SK-N-SH (cell line): ENCODE measurements at regions of chr4 and their contacts with region 1.

Region 1: GRCh38 chr4:176340871-176341685 is 21.3 kb downstream of the SPCS3 start:
- DNase-seq: peak; percentile 46
- H3K4me3 ChIP-seq: no peak overlapping the region
- H3K27ac ChIP-seq: no peak overlapping the region
- H3K4me1 ChIP-seq: peaks cover 0 to 10% of the 10 kb centered on the region in 2 experiments; a peak in 3 of 4 replicates
- H3K27me3 ChIP-seq: no peaks in the 10 kb centered on the region
- CTCF ChIP-seq: peak; percentile 80
- EP300 ChIP-seq: no peak
- RAD21 ChIP-seq: peak; percentile 89

Region 2: GRCh38 chr4:175947117-175947722 is 393.9 kb before region 1 on chr4:
- CTCF ChIA-PET with region 1: interaction called, 17 read pairs
- POLR2A ChIA-PET with region 1: no interaction called
- DNase-seq: no peak
- H3K4me3 ChIP-seq: peak overlapping the region in 1 of 2 experiments; percentile 17; a peak in 1 of 4 replicates
- H3K27ac ChIP-seq: no peak overlapping the region
- H3K4me1 ChIP-seq: no peaks in the 10 kb centered on the region; a peak in 1 of 4 replicates
- H3K27me3 ChIP-seq: no peaks in the 10 kb centered on the region
- CTCF ChIP-seq: peak; percentile 66
- EP300 ChIP-seq: no peak
- RAD21 ChIP-seq: peak; percentile 59

Region 3: GRCh38 chr4:176013476-176014247 is 327.4 kb before region 1 on chr4:
- CTCF ChIA-PET with region 1: no interaction called
- POLR2A ChIA-PET with region 1: no interaction called
- DNase-seq: no peak
- H3K4me3 ChIP-seq: no peak overlapping the region
- H3K27ac ChIP-seq: no peak overlapping the region
- H3K4me1 ChIP-seq: no peaks in the 10 kb centered on the region
- H3K27me3 ChIP-seq: no peaks in the 10 kb centered on the region; the same call in 1 of the 2 replicates
- CTCF ChIP-seq: no peak
- EP300 ChIP-seq: no peak
- RAD21 ChIP-seq: no peak

Region 4: DNA sequence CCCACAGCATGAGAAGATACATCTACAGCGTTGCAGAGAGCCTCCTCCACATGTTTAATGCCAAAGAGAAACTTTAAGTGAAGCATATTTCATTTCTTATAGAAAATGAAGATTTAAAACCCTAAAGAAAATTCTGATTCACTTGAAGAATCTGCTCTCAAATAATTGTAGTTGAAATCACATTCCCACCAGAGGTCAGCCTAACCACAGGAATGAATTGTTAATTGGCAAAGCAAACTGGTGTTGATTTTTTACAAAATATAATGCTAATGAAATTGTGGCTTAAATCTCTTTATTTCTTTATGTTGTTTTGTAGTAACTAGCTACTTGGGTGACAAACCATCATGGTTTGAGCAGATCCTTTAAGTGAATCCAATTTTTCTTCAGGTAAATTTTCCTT is 306.6 kb before region 1 on chr4:
- CTCF ChIA-PET with region 1: interaction called, 48 read pairs
- POLR2A ChIA-PET with region 1: no interaction called
- DNase-seq: peak; percentile 24
- H3K4me3 ChIP-seq: no peak overlapping the region
- H3K27ac ChIP-seq: no peak overlapping the region
- H3K4me1 ChIP-seq: no peaks in the 10 kb centered on the region
- H3K27me3 ChIP-seq: peaks cover 4% of the 10 kb centered on the region
- CTCF ChIP-seq: peak; percentile 55
- EP300 ChIP-seq: no peak
- RAD21 ChIP-seq: peak; percentile 84

Region 5: DNA sequence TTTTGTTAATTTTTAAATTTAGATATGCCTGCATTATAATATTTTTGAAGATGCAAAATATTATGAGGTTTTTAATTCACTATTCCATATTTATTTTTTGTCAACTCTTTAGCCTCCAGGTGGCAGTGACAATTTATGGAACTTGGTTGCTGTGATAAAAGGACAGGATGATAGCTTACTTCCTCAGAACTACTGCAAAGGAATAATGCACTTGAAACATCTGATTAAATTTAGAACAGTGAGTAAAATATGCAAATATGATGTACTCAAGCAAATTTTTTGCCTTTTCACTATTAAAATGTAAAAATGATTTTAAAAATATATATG is 190.8 kb before region 1 on chr4:
- CTCF ChIA-PET with region 1: interaction called, 30 read pairs
- POLR2A ChIA-PET with region 1: no interaction called
- DNase-seq: peak; percentile 17
- H3K4me3 ChIP-seq: no peak overlapping the region
- H3K27ac ChIP-seq: no peak overlapping the region; a peak in 1 of 4 replicates
- H3K4me1 ChIP-seq: no peaks in the 10 kb centered on the region; a peak in 1 of 4 replicates
- H3K27me3 ChIP-seq: no peaks in the 10 kb centered on the region
- CTCF ChIP-seq: peak; percentile 68
- EP300 ChIP-seq: no peak
- RAD21 ChIP-seq: peak; percentile 76

Region 6: GRCh38 chr4:176277162-176277904 is 63.7 kb before region 1 on chr4:
- CTCF ChIA-PET with region 1: interaction called, 12 read pairs
- POLR2A ChIA-PET with region 1: no interaction called
- DNase-seq: peak; percentile 51
- H3K4me3 ChIP-seq: no peak overlapping the region
- H3K27ac ChIP-seq: no peak overlapping the region
- H3K4me1 ChIP-seq: peaks cover 2 to 14% of the 10 kb centered on the region in 2 experiments; a peak in 2 of 4 replicates
- H3K27me3 ChIP-seq: no peaks in the 10 kb centered on the region
- CTCF ChIP-seq: peak; percentile 73
- EP300 ChIP-seq: no peak
- RAD21 ChIP-seq: peak; percentile 65

Region 7: DNA sequence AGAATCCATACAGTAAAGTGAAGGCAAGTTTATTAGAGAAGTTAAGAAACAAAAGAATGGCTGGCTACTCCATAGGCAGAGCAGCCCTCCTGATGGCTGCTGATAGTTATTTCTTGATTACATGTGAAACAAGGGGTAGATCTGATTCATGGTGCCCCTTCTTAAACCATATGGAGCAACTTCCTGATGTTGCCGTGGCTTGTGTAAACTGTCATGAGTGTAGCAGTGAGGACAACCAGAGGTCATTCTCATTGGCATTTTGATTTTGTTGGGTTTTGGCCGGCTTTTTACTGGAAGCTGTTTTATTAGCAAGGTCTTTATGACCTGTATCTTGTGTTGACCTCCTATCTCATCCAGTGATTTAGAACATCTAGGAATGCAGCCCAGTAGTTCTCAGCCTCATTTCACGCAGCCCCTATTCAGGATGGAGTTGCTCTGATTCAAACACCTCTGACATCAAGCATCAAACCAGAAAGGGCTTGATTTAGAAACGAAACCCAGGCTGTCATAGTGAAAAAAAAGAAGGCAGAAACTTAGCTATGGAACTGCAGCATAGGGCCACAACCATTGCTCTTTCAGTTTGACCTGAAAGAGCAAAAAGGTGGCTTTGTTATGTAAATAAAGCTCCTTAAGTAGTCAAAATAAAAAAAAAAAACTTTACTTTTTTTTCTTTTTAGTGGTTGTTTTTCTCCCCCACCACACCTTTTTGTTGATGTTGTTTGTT is 16.4 kb after region 1 on chr4:
- CTCF ChIA-PET with region 1: interaction called, 33 read pairs
- POLR2A ChIA-PET with region 1: no interaction called
- DNase-seq: no peak
- H3K4me3 ChIP-seq: no peak overlapping the region
- H3K27ac ChIP-seq: no peak overlapping the region
- H3K4me1 ChIP-seq: no peaks in the 10 kb centered on the region
- H3K27me3 ChIP-seq: no peaks in the 10 kb centered on the region
- CTCF ChIP-seq: no peak
- EP300 ChIP-seq: no peak
- RAD21 ChIP-seq: no peak